Endothelial cell of umbilical vein (primary cell): ENCODE measurements at regions of chr19 and their contacts with region 1.

Region 1: DNA sequence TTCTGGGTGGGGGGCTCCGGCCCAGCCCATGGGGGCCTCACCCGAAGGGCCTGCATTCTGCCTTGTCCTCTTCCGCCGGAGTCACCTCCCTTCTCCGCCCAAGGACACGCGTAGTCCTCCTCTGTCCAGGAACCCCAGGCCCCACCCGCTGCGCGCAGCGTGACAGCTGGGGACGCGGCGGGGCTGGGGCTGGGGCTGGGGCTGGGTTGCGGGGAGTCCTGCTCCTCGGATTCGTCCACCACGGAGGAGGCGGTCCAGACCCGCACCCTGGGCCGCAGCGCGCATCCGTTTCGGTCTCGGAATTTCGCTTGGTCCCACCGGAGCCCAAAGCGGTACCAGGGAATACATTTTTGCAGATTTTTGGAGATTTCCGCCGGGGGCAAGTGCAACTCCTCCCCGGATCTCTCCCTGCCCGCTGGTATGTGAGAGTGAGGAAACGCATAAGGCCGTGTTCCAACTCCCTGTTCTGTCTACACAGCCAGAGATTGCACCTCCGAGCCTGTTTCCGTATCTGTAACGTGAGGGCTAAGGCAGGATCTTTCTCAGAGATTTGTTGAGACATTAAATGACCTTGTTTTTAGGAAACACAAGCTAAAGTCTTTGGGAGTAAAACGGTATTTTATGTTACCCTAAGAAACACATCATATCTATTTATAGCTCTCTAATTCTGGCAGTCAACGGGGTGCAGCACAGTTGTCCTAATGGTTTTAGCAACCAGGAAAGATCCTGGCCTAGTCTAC is at the start of gene COX7A1:
- DNase-seq: peak; percentile 23
- H3K4me3 ChIP-seq: peak within 1 kb of the TSS; percentile 43 to 70 (median 56)
- H3K27ac ChIP-seq: peak within 1 kb of the TSS; percentile 53
- H3K4me1 ChIP-seq: peaks cover 13% of the 10 kb centered on the region
- H3K27me3 ChIP-seq: no peaks in the 10 kb centered on the region
- CTCF ChIP-seq: no peak
- POLR2A ChIP-seq: no peak
- total RNA-seq, gene COX7A1: 26.8 and 35.2 TPM in 2 replicates

Region 2: DNA sequence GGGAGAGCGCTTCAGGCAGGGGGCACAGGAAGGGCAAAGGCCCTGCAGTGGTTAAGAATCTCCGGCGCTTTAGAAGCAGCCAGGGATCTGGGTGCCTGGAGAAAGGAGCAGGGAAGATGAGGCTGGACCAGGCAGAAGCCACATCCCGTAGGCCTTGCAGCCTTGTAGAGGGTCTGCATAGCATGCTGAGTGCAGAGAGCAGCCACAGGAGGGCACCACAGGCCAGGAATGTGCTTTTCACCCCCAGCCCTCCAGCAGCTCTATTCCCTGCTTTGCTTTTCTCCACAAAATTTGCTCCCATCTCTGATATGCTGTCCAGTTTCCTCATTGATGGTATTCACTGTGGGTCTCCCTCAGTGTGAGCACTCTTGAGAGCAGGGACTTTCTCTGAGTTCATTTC is 92.1 kb before region 1 on chr19:
- CTCF ChIA-PET with region 1: interaction called, 12 read pairs
- POLR2A ChIA-PET with region 1: no interaction called
- dilution Hi-C with region 1: no loop called
- intact Hi-C with region 1: no loop called
- DNase-seq: peak; percentile 69
- H3K4me3 ChIP-seq: no peak overlapping the region
- H3K27ac ChIP-seq: no peak overlapping the region
- H3K4me1 ChIP-seq: peaks cover 8% of the 10 kb centered on the region
- H3K27me3 ChIP-seq: no peaks in the 10 kb centered on the region
- CTCF ChIP-seq: peak; percentile 72 to 89
- POLR2A ChIP-seq: no peak

Region 3: GRCh38 chr19:36139473-36140303 is 12.8 kb before region 1 on chr19 and contains the start of gene CAPNS1:
- CTCF ChIA-PET with region 1: no interaction called
- POLR2A ChIA-PET with region 1: no interaction called
- dilution Hi-C with region 1: no loop called
- intact Hi-C with region 1: loop called (anchors 1 kb)
- DNase-seq: peak; percentile 97
- H3K4me3 ChIP-seq: peak within 1 kb of the TSS; percentile 89 to 97 (median 91)
- H3K27ac ChIP-seq: peak within 1 kb of the TSS; percentile 91
- H3K4me1 ChIP-seq: peaks cover 20% of the 10 kb centered on the region
- H3K27me3 ChIP-seq: no peaks in the 10 kb centered on the region
- CTCF ChIP-seq: no peak
- POLR2A ChIP-seq: peak; percentile 96
- total RNA-seq, gene CAPNS1: 722 and 777 TPM in 2 replicates

Region 4: GRCh38 chr19:36363845-36364244 is 211.3 kb after region 1 on chr19:
- CTCF ChIA-PET with region 1: no interaction called
- POLR2A ChIA-PET with region 1: no interaction called
- dilution Hi-C with region 1: no loop called
- intact Hi-C with region 1: no loop called
- DNase-seq: no peak
- H3K4me3 ChIP-seq: no peak overlapping the region
- H3K27ac ChIP-seq: no peak overlapping the region
- H3K4me1 ChIP-seq: no peaks in the 10 kb centered on the region
- H3K27me3 ChIP-seq: no peaks in the 10 kb centered on the region
- CTCF ChIP-seq: no peak
- POLR2A ChIP-seq: no peak

Region 5: DNA sequence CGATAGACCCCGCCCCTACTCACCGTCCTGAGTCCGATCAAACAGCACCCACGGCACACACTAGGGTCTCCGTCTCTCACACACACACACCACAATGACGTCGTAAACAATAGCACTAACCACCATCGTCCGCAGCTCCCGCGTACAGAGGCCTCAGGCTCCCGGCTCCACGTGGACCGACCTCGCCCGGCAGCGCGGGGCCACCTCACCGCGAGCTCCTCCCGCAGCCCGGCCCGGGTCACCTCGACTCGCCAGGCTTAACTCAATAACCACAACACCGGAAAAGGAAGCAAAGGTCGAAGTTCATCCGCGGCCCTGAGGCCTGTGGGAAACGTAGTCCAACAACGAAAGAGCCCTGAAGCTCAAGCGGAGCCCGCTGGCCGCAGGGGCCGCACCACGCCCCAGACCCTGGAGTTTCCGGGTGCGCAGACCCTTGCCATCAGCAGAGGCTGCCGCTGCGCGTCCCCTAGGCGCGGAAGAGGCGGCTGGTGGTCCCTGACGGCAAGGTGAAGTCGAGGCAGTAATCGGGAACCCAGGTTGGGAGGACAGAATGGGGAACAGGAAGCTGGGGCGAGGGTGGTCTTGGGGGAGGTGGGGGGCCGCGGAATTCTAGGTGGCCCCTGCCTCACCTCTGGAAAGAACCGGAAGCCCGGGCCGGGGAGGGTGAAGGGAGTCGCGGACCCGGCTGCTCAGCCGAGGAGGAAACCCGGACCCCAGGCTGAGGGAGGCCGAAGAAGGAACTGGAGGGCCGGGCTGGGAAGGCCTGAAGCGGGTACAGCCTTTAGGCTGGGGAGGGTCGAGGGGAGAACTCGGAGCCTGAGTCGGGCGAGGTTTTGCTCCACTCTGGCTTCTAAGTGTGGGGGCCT is 420.7 kb after region 1 on chr19 and contains the start of gene ZNF529:
- CTCF ChIA-PET with region 1: no interaction called
- POLR2A ChIA-PET with region 1: no interaction called
- dilution Hi-C with region 1: no loop called
- intact Hi-C with region 1: no loop called
- DNase-seq: peak; percentile 94
- H3K4me3 ChIP-seq: peak within 1 kb of the TSS; percentile 3 to 78 (median 57)
- H3K27ac ChIP-seq: peak within 1 kb of the TSS; percentile 22
- H3K4me1 ChIP-seq: peaks cover 8% of the 10 kb centered on the region
- H3K27me3 ChIP-seq: no peaks in the 10 kb centered on the region
- CTCF ChIP-seq: no peak
- POLR2A ChIP-seq: peak; percentile 73
- total RNA-seq, gene ZNF529: 5.3 and 8.4 TPM in 2 replicates